ENCODE measurements at regions of chr22 and their contacts with region 1.

Region 1: DNA sequence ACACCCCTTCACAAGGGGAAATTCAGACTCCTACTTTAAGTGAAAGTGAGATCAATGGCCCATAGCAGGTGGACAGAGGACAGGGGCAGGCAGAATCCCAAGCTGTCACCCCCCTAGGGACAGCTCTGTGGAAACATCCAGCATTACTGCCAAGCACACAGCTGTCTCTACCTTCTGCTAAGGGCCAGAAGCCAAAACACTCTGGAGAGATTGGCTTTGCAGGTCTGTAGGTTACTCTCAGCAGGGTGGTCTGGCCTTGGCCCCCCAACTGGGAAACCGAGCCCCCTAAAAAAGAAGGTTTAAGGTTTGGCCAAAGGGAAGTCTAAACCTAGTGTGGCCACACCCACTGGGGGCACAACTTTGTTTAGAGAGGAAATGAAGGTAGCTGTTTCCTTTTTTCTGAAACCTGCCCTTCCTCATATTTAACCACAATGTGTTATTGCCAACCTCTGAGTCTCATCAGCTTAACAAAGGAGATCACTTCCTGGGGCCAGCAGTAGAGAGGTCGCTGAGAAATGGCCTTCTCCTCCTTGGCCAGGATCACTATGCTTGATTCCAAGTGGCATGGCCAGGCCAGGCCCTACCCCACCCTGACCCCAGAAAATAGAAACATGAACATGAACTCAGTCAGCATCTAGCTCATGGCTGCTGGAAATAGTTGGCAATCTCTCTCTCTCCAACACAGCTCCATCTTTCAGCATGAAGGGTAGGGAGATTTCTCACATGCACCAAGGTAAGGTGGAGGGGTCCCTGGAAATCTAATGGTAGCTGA is 25.9 kb upstream of the SCARF2 start:
- DNase-seq: peak in 7 of 9 donors; percentile 38 to 73 (median 66)
- ATAC-seq: peak; percentile 78
- H3K4me3 ChIP-seq: peak overlapping the region; percentile 34
- H3K4me3 Mint-ChIP-seq: peak overlapping the region; percentile 64 to 83 (median 74)
- H3K27ac ChIP-seq: peak overlapping the region; percentile 75
- H3K27ac Mint-ChIP-seq: peak overlapping the region; percentile 97 to 99 (median 98)
- H3K4me1 ChIP-seq: peaks cover 36 to 57% of the 10 kb centered on the region in 2 donors
- H3K4me1 Mint-ChIP-seq: peaks cover 35 to 78% (median 71%) of the 10 kb centered on the region in 7 donors
- H3K27me3 ChIP-seq: no peaks in the 10 kb centered on the region
- H3K27me3 Mint-ChIP-seq: no peaks in the 10 kb centered on the region

Region 2: DNA sequence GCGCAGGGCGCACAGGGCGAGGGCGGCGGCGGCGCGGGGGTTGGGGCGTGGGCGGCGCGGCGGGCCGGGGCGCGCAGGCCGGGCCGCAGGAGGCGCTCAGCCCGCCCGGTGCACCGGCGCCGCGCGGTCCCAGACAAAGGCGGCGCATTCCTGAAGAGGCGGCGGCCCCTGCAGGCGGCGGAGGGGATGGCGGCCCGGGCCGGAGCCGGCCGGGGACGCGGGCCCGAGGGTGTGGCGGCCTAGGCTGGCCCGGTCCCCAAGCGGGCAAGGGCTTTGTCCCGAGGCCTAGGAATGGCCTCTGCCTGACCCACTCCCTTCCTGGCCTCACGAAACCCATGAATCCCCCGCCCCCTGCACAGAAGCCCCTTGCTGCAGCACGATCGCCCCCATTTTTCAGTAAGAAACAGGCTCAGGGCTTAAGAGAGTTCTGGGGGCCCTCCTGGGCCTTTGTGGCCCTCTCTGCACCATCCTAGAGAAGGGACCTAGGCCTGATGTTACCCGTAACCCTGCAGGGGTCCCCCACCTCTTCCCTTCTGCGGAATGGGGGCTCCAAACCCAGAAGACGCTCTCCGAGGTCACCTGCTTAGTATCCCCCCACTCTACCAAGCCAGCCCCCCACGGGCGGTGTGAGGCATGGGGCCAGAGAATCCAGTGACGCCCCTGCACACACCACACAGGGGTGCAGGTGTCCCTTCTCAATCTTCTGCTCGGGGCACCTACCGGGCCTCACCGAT is 195.1 kb before region 1 on chr22 and contains the start of gene RTN4R:
- CTCF ChIA-PET with region 1: no interaction called
- POLR2A ChIA-PET with region 1: no interaction called
- intact Hi-C with region 1: no loop called
- DNase-seq: peak in 7 of 9 donors; percentile 41 to 73 (median 52)
- ATAC-seq: peak; percentile 84
- H3K4me3 ChIP-seq: no peak within 1 kb of the TSS
- H3K4me3 Mint-ChIP-seq: peak within 1 kb of the TSS; percentile 47 to 79 (median 74)
- H3K27ac ChIP-seq: peak within 1 kb of the TSS; percentile 8
- H3K27ac Mint-ChIP-seq: peak within 1 kb of the TSS in 1 of 9 donors; percentile 69
- H3K4me1 ChIP-seq: peaks cover 0 to 4% of the 10 kb centered on the region in 2 donors
- H3K4me1 Mint-ChIP-seq: peaks cover 0 to 7% (median 5%) of the 10 kb centered on the region in 7 donors
- H3K27me3 ChIP-seq: no peaks in the 10 kb centered on the region
- H3K27me3 Mint-ChIP-seq: peaks cover 0 to 6% (median 0%) of the 10 kb centered on the region in 5 donors
- total RNA-seq, gene RTN4R: 0.98 to 2.7 (median 1.8) TPM

Region 3: GRCh38 chr22:20298803-20299735 is 164.4 kb before region 1 on chr22:
- CTCF ChIA-PET with region 1: no interaction called
- POLR2A ChIA-PET with region 1: no interaction called
- intact Hi-C with region 1: loop called in 1 of 2 experiments (anchors 5 kb)
- DNase-seq: peak; percentile 80 to 93 (median 92)
- ATAC-seq: peak; percentile 96
- H3K4me3 ChIP-seq: peak overlapping the region; percentile 52
- H3K4me3 Mint-ChIP-seq: peak overlapping the region; percentile 72 to 89 (median 82)
- H3K27ac ChIP-seq: peak overlapping the region; percentile 60
- H3K27ac Mint-ChIP-seq: peak overlapping the region in 6 of 9 donors; percentile 36 to 79 (median 62)
- H3K4me1 ChIP-seq: peaks cover 0 to 3% of the 10 kb centered on the region in 2 donors
- H3K4me1 Mint-ChIP-seq: peaks cover 4 to 11% (median 9%) of the 10 kb centered on the region in 7 donors
- H3K27me3 ChIP-seq: no peaks in the 10 kb centered on the region
- H3K27me3 Mint-ChIP-seq: peaks cover 0 to 27% (median 4%) of the 10 kb centered on the region in 5 donors

Region 4: DNA sequence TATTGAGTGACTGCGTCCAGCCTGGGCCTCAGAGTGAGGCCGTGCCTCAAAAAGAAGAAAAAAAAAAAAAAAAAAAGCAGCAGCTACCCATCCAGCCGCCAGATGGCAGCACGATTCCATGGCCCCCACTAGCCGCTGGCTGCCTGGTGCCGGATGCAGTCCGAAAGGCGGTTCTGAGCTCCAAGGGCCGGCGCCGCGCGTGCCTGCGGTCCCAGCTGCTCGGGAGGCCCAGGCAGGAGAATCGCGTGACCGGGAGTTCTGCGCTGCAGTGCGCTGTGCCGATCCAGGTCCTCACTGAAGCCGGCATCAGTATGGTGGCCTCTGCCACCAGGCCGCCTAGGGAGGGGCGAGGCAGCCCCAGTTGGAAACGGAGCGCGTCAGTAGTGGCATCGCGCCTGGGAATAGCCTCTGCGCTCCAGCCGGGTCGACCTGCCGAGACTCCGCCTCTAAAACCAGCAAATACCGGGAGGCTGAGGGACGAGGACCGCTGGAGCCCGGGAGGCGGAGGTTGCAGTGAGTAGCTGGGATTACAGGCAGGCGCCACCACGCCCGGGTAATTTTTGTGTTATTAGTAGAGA is 45.2 kb before region 1 on chr22:
- CTCF ChIA-PET with region 1: interaction called, 9 read pairs
- POLR2A ChIA-PET with region 1: interaction called, 15 read pairs
- intact Hi-C with region 1: no loop called
- DNase-seq: peak; percentile 53 to 78 (median 68)
- ATAC-seq: peak; percentile 92
- H3K4me3 ChIP-seq: peak overlapping the region; percentile 56
- H3K4me3 Mint-ChIP-seq: peak overlapping the region in 9 of 10 donors; percentile 20 to 77 (median 57)
- H3K27ac ChIP-seq: no peak overlapping the region
- H3K27ac Mint-ChIP-seq: peak overlapping the region in 1 of 9 donors; percentile 43
- H3K4me1 ChIP-seq: peaks cover 0 to 6% of the 10 kb centered on the region in 2 donors
- H3K4me1 Mint-ChIP-seq: peaks cover 0 to 8% (median 0%) of the 10 kb centered on the region in 7 donors
- H3K27me3 ChIP-seq: no peaks in the 10 kb centered on the region
- H3K27me3 Mint-ChIP-seq: peaks cover 0 to 22% (median 0%) of the 10 kb centered on the region in 5 donors

Region 5: DNA sequence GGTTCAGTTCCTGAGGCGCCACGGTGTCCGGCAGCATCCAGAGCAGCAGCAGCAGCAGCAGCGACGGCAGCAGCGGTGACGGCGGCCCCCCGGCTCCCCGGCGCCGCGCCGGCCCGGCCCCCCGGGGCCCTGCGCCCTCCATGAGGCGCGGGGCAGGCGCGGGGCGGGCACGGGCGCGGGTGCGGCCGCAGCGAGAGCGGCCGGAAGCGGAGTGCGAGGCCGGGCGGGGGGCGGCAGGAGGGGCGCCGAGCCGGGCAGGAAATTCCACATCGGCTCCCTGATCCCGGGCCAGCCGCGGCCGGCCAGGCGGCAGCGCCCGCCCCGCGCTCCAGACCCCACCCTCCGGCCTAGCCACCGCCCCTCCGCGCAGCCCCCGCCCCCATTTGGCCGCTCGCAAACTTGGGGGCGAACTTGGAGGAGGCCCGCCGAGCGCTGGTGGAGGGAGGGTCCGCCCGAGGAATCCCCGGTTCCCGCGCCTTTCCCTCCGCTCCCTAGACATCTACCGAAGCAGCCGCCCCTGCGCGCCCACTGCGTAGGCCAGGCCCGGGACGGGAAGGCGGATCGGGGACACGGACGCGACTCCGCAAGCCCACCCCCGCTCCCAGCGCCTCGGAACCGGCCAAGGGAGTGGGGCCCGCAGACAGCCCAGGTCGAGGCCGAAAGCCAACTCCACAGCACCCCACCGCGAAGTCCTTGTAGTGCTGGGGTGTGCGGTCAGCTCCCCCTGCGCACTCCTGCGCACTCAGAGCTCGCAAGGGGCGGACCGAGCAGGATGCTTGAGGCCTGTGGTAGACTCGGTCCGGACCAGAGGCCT is 25.7 kb before region 1 on chr22 and contains the start of gene SCARF2:
- CTCF ChIA-PET with region 1: no interaction called
- POLR2A ChIA-PET with region 1: interaction called, 10 read pairs
- intact Hi-C with region 1: no loop called
- DNase-seq: no peak
- ATAC-seq: no peak
- H3K4me3 ChIP-seq: peak within 1 kb of the TSS; percentile 48
- H3K4me3 Mint-ChIP-seq: peak within 1 kb of the TSS; percentile 76 to 93 (median 84)
- H3K27ac ChIP-seq: no peak within 1 kb of the TSS
- H3K27ac Mint-ChIP-seq: peak within 1 kb of the TSS in 1 of 9 donors; percentile 66
- H3K4me1 ChIP-seq: peaks cover 8 to 11% of the 10 kb centered on the region in 2 donors
- H3K4me1 Mint-ChIP-seq: peaks cover 6 to 17% (median 12%) of the 10 kb centered on the region in 7 donors
- H3K27me3 ChIP-seq: peaks cover 3 to 23% of the 10 kb centered on the region in 2 donors
- H3K27me3 Mint-ChIP-seq: peaks cover 29 to 55% (median 33%) of the 10 kb centered on the region in 5 donors
- total RNA-seq, gene SCARF2: 0.70 to 2.6 (median 2.2) TPM

Region 6: GRCh38 chr22:20490183-20490940 is 26.9 kb after region 1 on chr22:
- CTCF ChIA-PET with region 1: interaction called, 4 read pairs
- POLR2A ChIA-PET with region 1: interaction called, 47 read pairs
- intact Hi-C with region 1: no loop called
- DNase-seq: no peak
- ATAC-seq: peak; percentile 38
- H3K4me3 ChIP-seq: no peak overlapping the region
- H3K4me3 Mint-ChIP-seq: peak overlapping the region in 7 of 10 donors; percentile 5 to 64 (median 37)
- H3K27ac ChIP-seq: peak overlapping the region; percentile 43
- H3K27ac Mint-ChIP-seq: peak overlapping the region in 6 of 9 donors; percentile 47 to 83 (median 64)
- H3K4me1 ChIP-seq: peaks cover 6 to 48% of the 10 kb centered on the region in 2 donors
- H3K4me1 Mint-ChIP-seq: peaks cover 44 to 78% (median 71%) of the 10 kb centered on the region in 7 donors
- H3K27me3 ChIP-seq: no peaks in the 10 kb centered on the region
- H3K27me3 Mint-ChIP-seq: no peaks in the 10 kb centered on the region

Region 7: GRCh38 chr22:20507253-20508066 is 44.0 kb after region 1 on chr22 and contains the start of gene MED15:
- CTCF ChIA-PET with region 1: no interaction called
- POLR2A ChIA-PET with region 1: interaction called, 14 read pairs
- intact Hi-C with region 1: no loop called
- DNase-seq: peak; percentile 69 to 87 (median 83)
- ATAC-seq: peak; percentile 92
- H3K4me3 ChIP-seq: peak within 1 kb of the TSS; percentile 92
- H3K4me3 Mint-ChIP-seq: peak within 1 kb of the TSS; percentile 96 to 100 (median 98)
- H3K27ac ChIP-seq: peak within 1 kb of the TSS; percentile 95
- H3K27ac Mint-ChIP-seq: peak within 1 kb of the TSS; percentile 90 to 99 (median 96)
- H3K4me1 ChIP-seq: peaks cover 32 to 37% of the 10 kb centered on the region in 2 donors
- H3K4me1 Mint-ChIP-seq: peaks cover 44 to 58% (median 55%) of the 10 kb centered on the region in 7 donors
- H3K27me3 ChIP-seq: no peaks in the 10 kb centered on the region
- H3K27me3 Mint-ChIP-seq: no peaks in the 10 kb centered on the region
- total RNA-seq, gene MED15: 169 to 235 (median 201) TPM

Region 8: DNA sequence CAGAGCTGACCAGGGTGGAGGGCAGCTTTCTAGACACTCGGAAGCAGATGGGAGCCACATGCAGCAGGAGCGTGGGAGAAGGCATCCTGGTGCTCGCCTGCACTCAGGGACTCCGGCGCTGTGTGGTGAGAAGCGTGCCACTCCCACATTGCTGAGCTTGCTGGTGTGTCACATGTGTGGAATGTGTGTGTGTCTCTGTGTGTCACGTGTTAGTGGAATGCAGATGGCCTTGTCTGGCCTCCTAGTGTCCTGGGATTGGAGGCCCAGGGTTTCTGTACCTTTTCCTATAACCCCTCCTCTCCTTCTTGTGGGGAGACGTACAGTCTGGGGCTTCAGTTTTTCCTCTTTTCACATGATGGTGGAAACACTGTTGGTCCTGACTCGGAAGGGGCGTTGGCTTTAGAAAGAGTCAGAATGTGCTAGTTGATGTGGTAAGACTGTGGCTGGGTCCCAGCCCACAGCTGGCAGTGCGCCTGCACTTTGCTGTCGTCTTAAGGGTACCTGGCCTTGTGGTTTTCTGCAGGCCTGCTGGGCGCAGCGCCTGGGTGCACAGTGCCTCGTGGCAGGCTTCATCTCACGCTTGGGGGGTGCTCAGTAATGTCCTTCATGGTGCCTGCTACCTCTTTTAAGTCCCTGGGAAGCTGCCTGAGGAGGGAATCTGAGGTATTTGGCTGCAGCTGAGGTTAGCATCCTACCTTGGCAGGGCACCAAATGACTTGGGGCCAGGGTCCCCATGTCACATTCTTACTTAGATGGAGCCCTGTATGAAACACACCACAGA is 105.7 kb after region 1 on chr22:
- CTCF ChIA-PET with region 1: interaction called, 17 read pairs
- POLR2A ChIA-PET with region 1: interaction called, 51 read pairs
- intact Hi-C with region 1: loop called in 1 of 2 experiments (anchors 1 kb)
- DNase-seq: peak; percentile 56 to 91 (median 88)
- ATAC-seq: peak; percentile 82
- H3K4me3 ChIP-seq: peak overlapping the region; percentile 39
- H3K4me3 Mint-ChIP-seq: peak overlapping the region; percentile 79 to 88 (median 84)
- H3K27ac ChIP-seq: peak overlapping the region; percentile 46
- H3K27ac Mint-ChIP-seq: peak overlapping the region; percentile 92 to 99 (median 93)
- H3K4me1 ChIP-seq: peaks cover 76 to 81% of the 10 kb centered on the region in 2 donors
- H3K4me1 Mint-ChIP-seq: peaks cover 59 to 96% (median 80%) of the 10 kb centered on the region in 7 donors
- H3K27me3 ChIP-seq: no peaks in the 10 kb centered on the region
- H3K27me3 Mint-ChIP-seq: no peaks in the 10 kb centered on the region

Measured in naive thymus-derived CD4-positive, alpha-beta T cell (primary cell).